CD8-positive, alpha-beta memory T cell (primary cell): ENCODE measurements at regions of chr3 and their contacts with region 1.

Region 1: DNA sequence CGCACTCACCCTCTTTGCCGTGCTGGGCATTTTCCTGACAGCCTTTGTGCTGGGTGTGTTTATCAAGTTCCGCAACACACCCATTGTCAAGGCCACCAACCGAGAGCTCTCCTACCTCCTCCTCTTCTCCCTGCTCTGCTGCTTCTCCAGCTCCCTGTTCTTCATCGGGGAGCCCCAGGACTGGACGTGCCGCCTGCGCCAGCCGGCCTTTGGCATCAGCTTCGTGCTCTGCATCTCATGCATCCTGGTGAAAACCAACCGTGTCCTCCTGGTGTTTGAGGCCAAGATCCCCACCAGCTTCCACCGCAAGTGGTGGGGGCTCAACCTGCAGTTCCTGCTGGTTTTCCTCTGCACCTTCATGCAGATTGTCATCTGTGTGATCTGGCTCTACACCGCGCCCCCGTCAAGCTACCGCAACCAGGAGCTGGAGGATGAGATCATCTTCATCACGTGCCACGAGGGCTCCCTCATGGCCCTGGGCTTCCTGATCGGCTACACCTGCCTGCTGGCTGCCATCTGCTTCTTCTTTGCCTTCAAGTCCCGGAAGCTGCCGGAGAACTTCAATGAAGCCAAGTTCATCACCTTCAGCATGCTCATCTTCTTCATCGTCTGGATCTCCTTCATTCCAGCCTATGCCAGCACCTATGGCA is 41.1 kb upstream of the CSTA start:
- DNase-seq: no peak
- H3K4me3 ChIP-seq: no peak overlapping the region
- H3K4me3 Mint-ChIP-seq: no peak overlapping the region
- H3K27ac ChIP-seq: no peak overlapping the region
- H3K27ac Mint-ChIP-seq: no peak overlapping the region
- H3K4me1 ChIP-seq: no peaks in the 10 kb centered on the region
- H3K4me1 Mint-ChIP-seq: no peaks in the 10 kb centered on the region
- H3K27me3 ChIP-seq: no peaks in the 10 kb centered on the region
- H3K27me3 Mint-ChIP-seq: peaks cover 5 to 16% of the 10 kb centered on the region in 2 donors

Region 2: GRCh38 chr3:122299872-122300460 is 16.0 kb after region 1 on chr3:
- CTCF ChIA-PET with region 1: interaction called, 11 read pairs
- POLR2A ChIA-PET with region 1: no interaction called
- DNase-seq: peak in 3 of 5 donors; percentile 23 to 48 (median 33)
- H3K4me3 ChIP-seq: no peak overlapping the region
- H3K4me3 Mint-ChIP-seq: no peak overlapping the region
- H3K27ac ChIP-seq: no peak overlapping the region
- H3K27ac Mint-ChIP-seq: no peak overlapping the region
- H3K4me1 ChIP-seq: no peaks in the 10 kb centered on the region
- H3K4me1 Mint-ChIP-seq: peaks cover 8 to 9% (median 8%) of the 10 kb centered on the region in 3 donors
- H3K27me3 ChIP-seq: no peaks in the 10 kb centered on the region
- H3K27me3 Mint-ChIP-seq: no peaks in the 10 kb centered on the region